ENCODE measurements at regions of chr9 and their contacts with region 1.

Region 1: DNA sequence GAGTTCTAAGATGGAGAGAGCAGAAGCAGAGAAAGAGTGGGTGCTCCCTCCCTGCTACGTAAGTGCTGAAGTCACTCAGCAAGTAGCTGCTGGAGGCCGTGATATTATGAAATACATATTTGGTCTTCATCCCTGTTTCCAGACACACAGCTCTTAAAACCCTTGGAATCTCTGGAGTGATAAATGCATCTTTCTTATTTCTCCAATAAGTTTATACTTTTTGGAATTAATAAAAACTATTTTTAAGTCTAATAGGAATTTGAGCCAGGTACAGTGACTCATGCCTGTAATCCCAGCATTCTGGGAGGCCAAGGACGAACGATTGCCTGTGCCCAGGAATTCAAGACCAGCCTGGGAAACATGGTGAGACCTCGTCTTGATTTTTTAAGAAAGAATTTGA is 60.6 kb downstream of the AUH start:
- DNase-seq: no peak
- H3K4me3 ChIP-seq: no peak overlapping the region
- CTCF ChIP-seq: no peak
- POLR2A ChIP-seq: no peak

Region 2: DNA sequence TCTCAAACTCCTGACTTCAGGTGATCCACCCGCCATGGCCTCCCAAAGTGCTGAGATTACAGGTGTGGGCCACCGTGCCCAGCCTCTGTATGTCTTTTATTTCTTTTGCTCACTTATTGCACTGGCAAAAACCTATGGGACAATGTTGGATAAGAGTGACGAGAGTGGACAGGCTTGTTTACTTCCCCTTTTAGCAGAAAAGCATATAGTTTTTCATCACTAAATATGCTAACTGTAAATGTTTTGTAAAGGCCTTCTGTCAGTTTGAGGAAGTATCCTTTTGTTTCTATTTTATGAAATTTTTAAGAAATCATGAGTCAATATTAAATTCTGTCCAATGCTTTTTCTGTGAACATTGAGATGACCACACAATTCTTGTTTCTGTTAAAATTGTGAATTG is 42.7 kb before region 1 on chr9:
- intact Hi-C with region 1: no loop called
- DNase-seq: no peak
- H3K4me3 ChIP-seq: no peak overlapping the region
- CTCF ChIP-seq: no peak
- POLR2A ChIP-seq: no peak

Region 3: DNA sequence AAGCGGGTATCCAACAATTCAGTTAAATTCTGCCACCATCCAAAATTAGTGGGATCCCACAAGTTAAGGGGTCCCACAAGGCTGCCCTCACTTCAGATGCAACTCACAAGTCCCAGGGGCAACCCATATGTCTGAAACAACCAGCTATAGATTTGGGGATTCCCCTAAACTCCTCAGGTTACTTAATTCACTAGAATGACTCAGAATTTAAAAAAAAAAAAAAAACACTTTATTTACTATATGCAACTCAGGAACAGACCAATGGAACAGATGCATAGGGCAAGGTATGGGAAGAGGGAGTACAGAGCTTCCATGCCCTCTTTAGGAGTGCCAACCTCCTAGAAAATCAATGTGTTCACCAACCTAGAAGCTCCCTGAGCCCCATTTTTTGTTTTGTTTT is 45.5 kb after region 1 on chr9:
- intact Hi-C with region 1: no loop called
- DNase-seq: no peak
- H3K4me3 ChIP-seq: no peak overlapping the region
- CTCF ChIP-seq: no peak
- POLR2A ChIP-seq: no peak

Region 4: GRCh38 chr9:91361291-91362050 is 60.3 kb after region 1 on chr9 and contains the start of gene AUH:
- intact Hi-C with region 1: loop called (anchors 10 kb)
- DNase-seq: peak; percentile 72 to 95
- H3K4me3 ChIP-seq: peak within 1 kb of the TSS; percentile 97
- CTCF ChIP-seq: no peak
- POLR2A ChIP-seq: peak in 1 of 2 donors; percentile 33
- total RNA-seq, gene AUH: 30.7 to 54.4 (median 32.4) TPM

Region 5: DNA sequence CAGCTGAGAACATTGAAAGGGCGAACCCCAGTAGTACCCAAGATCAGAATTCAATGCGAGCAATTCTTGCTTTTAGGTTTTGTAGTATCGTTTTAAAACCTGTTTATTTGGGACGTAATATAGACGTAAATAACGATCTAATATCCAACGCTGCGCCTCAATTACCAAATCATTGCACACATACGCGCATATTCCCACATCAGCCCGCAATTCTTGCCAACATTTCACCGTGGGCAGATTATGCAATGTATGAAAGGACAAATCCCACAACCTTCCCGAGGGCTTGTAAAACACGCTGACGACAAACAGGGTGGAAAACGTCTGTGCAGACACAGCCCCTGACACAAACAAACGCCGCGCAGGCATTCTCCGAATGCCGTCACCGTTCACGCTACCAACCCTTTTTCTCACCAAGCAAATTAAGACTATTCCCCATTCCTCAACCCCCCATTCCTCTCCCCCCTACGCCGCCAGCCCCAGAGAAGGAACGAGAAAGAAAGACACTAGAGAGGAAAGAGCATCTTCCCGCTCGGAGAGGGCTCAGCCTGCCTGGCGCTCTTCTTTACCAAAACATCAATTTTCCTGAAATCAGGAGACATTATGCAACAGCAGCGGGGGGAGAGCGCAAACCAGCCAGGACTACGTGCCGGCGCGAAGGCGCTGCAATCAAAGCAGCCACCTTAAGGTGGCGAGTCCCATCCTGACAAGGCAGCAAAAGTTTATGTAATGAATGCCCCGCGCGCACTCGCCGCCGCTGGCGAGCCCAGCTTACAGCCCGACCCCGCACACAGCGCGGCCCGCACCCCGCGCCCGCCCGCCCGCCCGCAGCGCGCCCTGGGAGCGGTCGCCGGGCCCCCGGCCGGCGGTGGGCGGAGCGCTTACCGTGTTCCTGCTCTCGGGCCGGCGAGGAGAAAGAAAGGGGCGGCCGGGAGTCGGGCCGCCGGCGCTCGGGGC is 121.9 kb after region 1 on chr9:
- intact Hi-C with region 1: no loop called
- DNase-seq: peak; percentile 73 to 94
- H3K4me3 ChIP-seq: peak overlapping the region; percentile 88
- CTCF ChIP-seq: no peak
- POLR2A ChIP-seq: no peak

Measured in lower leg skin (tissue), 4 donors.